A549 (cell line): ENCODE measurements at regions of chr10 and their contacts with region 1.

Region 1: GRCh38 chr10:24556750-24557742 is 166.6 kb downstream of the ARHGAP21 start:
- DNase-seq: peak; percentile 44 to 80
- ATAC-seq: peak; percentile 80 to 81
- H3K4me3 ChIP-seq: no peak overlapping the region
- H3K27ac ChIP-seq: no peak overlapping the region
- H3K4me1 ChIP-seq: no peaks in the 10 kb centered on the region
- CTCF ChIP-seq: peak; percentile 74
- EP300 ChIP-seq: no peak
- POLR2A ChIP-seq: no peak
- RAD21 ChIP-seq: peak; percentile 70 to 76

Region 2: DNA sequence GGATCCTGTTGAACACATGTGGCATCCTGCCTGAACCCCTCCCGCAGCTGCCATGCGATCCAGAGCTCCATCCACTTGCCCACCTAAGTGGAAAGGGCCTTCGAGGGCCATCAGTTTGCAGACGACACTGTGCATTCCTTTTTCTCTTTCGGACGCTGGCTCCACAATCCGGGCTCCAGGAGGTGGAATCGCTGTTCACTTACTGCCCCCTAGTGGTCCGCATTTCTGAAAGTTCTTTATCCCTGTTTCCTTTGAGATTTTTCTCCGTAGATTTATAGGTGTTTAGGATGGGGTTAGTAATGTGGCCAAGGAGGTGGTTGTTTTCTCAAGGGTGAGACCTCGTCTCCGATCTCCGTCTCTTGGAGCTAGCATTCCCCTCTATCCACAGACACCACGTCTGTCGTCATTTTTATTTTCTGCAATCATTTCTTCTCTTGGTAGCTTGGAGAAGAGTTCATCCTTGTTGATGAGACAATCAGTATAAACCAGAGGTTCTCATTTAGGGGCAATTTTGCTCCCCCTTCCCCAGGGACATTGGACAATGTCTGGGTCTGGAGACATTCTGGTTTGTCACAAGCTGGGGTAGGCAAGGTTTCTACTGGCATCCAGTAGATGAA is 38.0 kb before region 1 on chr10:
- CTCF ChIA-PET with region 1: interaction called, 22 read pairs
- POLR2A ChIA-PET with region 1: no interaction called
- DNase-seq: peak; percentile 57 to 67
- ATAC-seq: peak; percentile 83 to 93
- H3K4me3 ChIP-seq: no peak overlapping the region
- H3K27ac ChIP-seq: no peak overlapping the region
- H3K4me1 ChIP-seq: no peaks in the 10 kb centered on the region
- CTCF ChIP-seq: peak; percentile 82
- EP300 ChIP-seq: no peak
- POLR2A ChIP-seq: no peak
- RAD21 ChIP-seq: peak; percentile 82 to 83